ENCODE measurements at regions of chr4 and their contacts with region 1.

Region 1: GRCh38 chr4:111283061-111283677 is 660.3 kb upstream of the PITX2 start:
- DNase-seq: peak; percentile 58
- H3K4me3 ChIP-seq: no peak overlapping the region
- H3K27ac ChIP-seq: no peak overlapping the region
- H3K4me1 ChIP-seq: no peaks in the 10 kb centered on the region
- H3K27me3 ChIP-seq: no peaks in the 10 kb centered on the region
- CTCF ChIP-seq: peak; percentile 77 to 85
- POLR2A ChIP-seq: no peak

Region 2: DNA sequence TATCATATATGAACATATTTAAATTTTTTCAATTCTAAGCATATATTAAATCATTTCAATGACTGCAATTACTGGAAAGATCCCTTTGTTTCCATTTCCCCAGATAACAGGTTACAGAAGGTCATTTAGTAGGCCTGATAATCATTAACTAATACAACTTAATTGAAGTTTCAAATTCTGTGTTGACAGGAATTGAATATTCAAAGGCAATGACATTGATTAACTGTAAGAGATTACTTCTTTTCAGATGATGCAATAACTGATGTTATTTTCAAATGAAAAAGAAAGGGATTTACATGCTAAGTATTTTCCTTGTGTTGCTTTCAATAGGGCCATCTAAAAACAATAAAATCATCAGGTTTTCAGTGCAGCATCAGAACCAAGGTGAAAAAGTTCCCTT is 888.3 kb before region 1 on chr4:
- CTCF ChIA-PET with region 1: no interaction called
- POLR2A ChIA-PET with region 1: no interaction called
- dilution Hi-C with region 1: no loop called
- intact Hi-C with region 1: no loop called
- DNase-seq: no peak
- H3K4me3 ChIP-seq: no peak overlapping the region
- H3K27ac ChIP-seq: no peak overlapping the region
- H3K4me1 ChIP-seq: no peaks in the 10 kb centered on the region
- H3K27me3 ChIP-seq: no peaks in the 10 kb centered on the region
- CTCF ChIP-seq: no peak
- POLR2A ChIP-seq: no peak

Region 3: GRCh38 chr4:111268769-111269414 is 14.3 kb before region 1 on chr4:
- CTCF ChIA-PET with region 1: interaction called, 14 read pairs
- POLR2A ChIA-PET with region 1: no interaction called
- dilution Hi-C with region 1: no loop called
- intact Hi-C with region 1: no loop called
- DNase-seq: peak; percentile 50
- H3K4me3 ChIP-seq: no peak overlapping the region
- H3K27ac ChIP-seq: peak overlapping the region; percentile 25
- H3K4me1 ChIP-seq: peaks cover 25% of the 10 kb centered on the region
- H3K27me3 ChIP-seq: no peaks in the 10 kb centered on the region
- CTCF ChIP-seq: no peak
- POLR2A ChIP-seq: no peak

Region 4: GRCh38 chr4:111296466-111296865 is 13.3 kb after region 1 on chr4:
- CTCF ChIA-PET with region 1: interaction called, 10 read pairs
- POLR2A ChIA-PET with region 1: no interaction called
- dilution Hi-C with region 1: no loop called
- intact Hi-C with region 1: no loop called
- DNase-seq: no peak
- H3K4me3 ChIP-seq: no peak overlapping the region
- H3K27ac ChIP-seq: no peak overlapping the region
- H3K4me1 ChIP-seq: no peaks in the 10 kb centered on the region
- H3K27me3 ChIP-seq: no peaks in the 10 kb centered on the region
- CTCF ChIP-seq: no peak
- POLR2A ChIP-seq: no peak

Region 5: GRCh38 chr4:111303806-111304205 is 20.6 kb after region 1 on chr4:
- CTCF ChIA-PET with region 1: interaction called, 10 read pairs
- POLR2A ChIA-PET with region 1: no interaction called
- dilution Hi-C with region 1: no loop called
- intact Hi-C with region 1: no loop called
- DNase-seq: no peak
- H3K4me3 ChIP-seq: no peak overlapping the region
- H3K27ac ChIP-seq: no peak overlapping the region
- H3K4me1 ChIP-seq: no peaks in the 10 kb centered on the region
- H3K27me3 ChIP-seq: no peaks in the 10 kb centered on the region
- CTCF ChIP-seq: no peak
- POLR2A ChIP-seq: no peak

Region 6: DNA sequence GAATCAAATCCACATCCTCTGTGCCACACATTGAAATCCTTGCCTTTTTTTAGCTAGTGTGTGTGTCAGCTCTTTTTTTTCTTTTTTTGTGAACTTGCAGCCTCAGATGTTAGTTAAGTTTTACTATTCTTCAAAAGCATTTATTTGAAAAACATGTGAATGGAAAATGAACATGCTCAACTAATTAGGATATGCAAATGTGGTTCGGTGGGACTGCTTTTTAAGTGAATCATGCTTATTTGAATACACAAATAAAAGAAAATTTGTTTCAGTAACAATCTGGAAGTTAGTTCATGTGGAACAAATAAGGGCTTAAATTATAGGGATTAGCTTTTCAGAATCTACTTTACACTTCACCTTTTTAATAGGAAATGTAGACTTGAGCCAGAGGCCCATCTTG is 110.6 kb after region 1 on chr4:
- CTCF ChIA-PET with region 1: no interaction called
- POLR2A ChIA-PET with region 1: no interaction called
- dilution Hi-C with region 1: no loop called
- intact Hi-C with region 1: no loop called
- DNase-seq: no peak
- H3K4me3 ChIP-seq: no peak overlapping the region
- H3K27ac ChIP-seq: no peak overlapping the region
- H3K4me1 ChIP-seq: no peaks in the 10 kb centered on the region
- H3K27me3 ChIP-seq: no peaks in the 10 kb centered on the region
- CTCF ChIP-seq: no peak
- POLR2A ChIP-seq: no peak

Region 7: DNA sequence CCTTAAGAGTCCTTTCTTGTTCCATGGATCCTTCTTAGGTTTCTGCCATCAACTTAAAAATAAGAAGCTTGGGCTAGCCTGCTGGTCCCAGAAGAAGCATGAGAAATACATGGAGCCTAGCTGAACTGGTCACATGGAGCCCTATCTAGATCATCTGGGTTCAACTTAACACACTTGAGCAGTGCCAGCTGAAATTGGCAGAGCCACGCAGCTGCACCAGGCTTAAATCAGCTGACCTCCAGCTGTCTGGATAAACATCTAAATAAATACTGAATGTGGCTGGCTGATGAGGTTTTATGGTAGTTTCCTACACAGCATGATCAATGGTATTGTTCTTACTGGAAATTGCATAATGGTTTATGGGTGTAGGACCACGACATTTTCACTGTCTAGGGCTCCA is 263.7 kb after region 1 on chr4:
- CTCF ChIA-PET with region 1: no interaction called
- POLR2A ChIA-PET with region 1: no interaction called
- dilution Hi-C with region 1: no loop called
- intact Hi-C with region 1: no loop called
- DNase-seq: peak; percentile 10
- H3K4me3 ChIP-seq: no peak overlapping the region
- H3K27ac ChIP-seq: no peak overlapping the region
- H3K4me1 ChIP-seq: no peaks in the 10 kb centered on the region
- H3K27me3 ChIP-seq: no peaks in the 10 kb centered on the region
- CTCF ChIP-seq: no peak
- POLR2A ChIP-seq: no peak

Region 8: DNA sequence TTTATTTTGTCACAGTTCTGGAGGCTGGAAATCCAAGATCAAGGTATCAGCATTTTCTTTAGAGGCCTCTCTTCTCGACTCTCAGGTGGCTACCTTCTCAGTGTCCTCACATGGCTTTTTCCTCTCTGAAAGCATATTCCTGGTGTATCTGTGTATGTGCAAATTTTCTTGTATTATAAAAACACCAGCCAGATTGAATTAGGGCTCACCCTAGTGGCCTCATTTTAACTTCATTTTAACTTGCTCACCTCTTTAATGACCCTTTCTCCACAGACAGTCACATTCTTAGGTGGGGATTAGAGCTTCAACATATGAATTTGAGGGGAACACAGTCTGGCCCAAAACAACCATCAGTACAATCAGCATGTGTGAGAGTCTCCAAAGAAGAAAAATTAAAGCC is 319.7 kb after region 1 on chr4:
- CTCF ChIA-PET with region 1: interaction called, 3 read pairs
- POLR2A ChIA-PET with region 1: no interaction called
- dilution Hi-C with region 1: no loop called
- intact Hi-C with region 1: loop called (anchors 10 kb)
- DNase-seq: peak; percentile 38
- H3K4me3 ChIP-seq: no peak overlapping the region
- H3K27ac ChIP-seq: no peak overlapping the region
- H3K4me1 ChIP-seq: no peaks in the 10 kb centered on the region
- H3K27me3 ChIP-seq: no peaks in the 10 kb centered on the region
- CTCF ChIP-seq: peak; percentile 7 to 15
- POLR2A ChIP-seq: no peak

Measured in endothelial cell of umbilical vein (primary cell).